ENCODE measurements at regions of chr3 and their contacts with region 1.

Region 1: GRCh38 chr3:156674046-156674910 is at the start of gene TIPARP:
- DNase-seq: peak; percentile 100
- ATAC-seq: peak; percentile 96
- total RNA-seq, gene TIPARP: 31.6 TPM

Region 2: GRCh38 chr3:156547637-156548036 is 126.6 kb before region 1 on chr3:
- intact Hi-C with region 1: loop called (anchors 5 kb)
- DNase-seq: no peak
- ATAC-seq: peak; percentile 81

Region 3: DNA sequence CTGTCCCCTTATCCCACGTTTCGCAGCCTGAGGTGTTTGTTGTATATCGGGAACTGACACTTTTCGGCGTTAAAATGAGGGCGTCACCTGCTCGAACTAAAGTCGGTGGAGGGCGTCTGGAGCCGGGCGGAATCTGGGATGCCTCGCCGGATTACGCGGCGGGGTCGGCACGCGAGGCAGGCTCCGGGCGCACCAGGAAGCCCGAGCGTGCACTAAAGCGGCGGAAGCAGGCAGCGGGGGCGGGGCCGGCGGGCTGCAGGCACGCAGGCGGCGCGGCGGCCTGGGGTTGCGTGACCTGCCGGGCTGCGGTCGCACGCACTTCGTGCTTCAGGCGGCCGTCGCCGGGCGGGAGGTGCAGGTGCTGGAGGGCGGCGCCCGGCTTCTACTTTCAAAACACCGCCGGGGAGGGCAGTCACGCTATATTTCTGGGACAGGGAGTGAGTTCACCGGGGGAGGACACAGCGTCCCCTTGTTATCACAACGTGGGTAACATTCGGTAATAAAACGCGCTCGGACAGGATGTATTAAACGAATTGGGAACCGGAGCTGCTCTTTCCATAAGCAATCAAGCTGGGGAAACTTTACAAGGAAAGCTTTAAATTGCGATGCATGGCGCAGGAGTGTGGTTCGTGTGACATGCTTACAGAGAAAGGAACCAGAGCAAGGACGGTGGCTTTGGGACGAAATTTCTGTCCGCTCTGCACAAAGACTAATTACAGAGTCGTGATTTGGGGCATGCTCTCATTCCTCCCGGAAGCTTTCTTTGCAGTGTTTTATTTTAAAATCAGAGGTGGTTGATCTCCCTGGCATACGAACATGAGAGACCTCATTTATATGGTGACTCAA is 142.7 kb after region 1 on chr3:
- intact Hi-C with region 1: loop called (anchors 5 kb)
- DNase-seq: peak; percentile 93
- ATAC-seq: peak; percentile 96

Region 4: DNA sequence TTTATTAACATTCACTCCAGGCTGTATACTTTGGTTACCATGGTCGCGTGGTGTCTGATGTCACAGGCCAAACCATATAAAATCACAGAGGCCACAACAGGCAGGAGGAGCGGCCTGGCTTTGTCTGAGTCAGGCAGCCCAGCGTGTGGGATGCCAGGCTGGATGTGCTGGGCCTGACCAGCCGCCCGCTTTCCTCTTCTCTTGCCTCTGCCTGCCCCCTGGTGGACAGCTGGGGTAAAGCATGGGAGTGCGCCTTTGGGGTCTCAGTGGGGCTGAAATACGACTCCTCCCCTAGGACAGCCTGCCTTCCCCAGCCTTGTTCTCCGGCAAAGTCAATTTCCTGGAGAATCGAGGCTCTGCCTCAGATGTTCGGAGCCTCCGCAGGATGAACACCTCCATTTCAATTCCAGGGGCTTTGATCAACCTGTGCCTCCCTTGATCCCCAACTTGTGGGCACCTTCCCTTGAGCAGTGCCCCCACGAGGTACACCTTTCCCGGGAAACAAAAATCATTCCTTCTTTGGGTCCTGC is 407.5 kb after region 1 on chr3:
- intact Hi-C with region 1: loop called (anchors 2 kb)
- DNase-seq: peak; percentile 94
- ATAC-seq: peak; percentile 83

Region 5: DNA sequence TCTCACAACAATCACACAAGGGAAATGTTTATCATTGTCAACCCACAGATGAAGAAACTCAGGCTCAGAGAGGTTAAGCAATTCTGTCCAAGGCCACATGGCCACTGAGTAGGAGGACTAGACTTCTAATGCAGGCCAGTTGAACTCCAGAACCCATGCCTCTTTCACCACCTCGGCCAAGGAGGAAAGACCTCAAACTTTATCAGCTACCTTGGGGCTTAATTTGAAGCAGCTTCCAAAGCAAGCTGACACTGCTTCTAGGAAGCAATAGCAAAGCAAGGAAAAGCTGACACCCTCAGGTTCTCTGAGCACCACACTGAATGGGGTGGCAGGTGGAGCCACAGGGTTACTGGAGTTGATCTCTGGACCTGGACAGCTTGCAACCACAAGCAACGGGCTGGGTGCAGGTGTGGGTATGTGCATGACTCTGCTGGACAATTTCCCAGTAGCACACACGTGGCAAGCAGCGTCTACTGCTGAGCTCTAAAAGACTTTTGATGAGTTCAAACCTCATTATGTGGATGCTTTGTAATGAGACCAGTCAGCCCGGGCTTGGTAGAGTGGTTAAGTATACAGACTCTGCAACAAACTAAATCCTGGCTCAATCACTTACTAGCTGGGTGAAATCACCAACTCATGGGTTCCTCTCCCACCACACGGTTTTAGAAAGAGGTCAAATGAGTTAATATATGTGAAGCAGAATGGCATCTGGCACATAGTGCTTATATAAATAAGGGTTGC is 462.5 kb after region 1 on chr3:
- intact Hi-C with region 1: loop called (anchors 5 kb)
- DNase-seq: no peak
- ATAC-seq: peak; percentile 40